ENCODE measurements at regions of chr20 and their contacts with region 1.

Region 1: DNA sequence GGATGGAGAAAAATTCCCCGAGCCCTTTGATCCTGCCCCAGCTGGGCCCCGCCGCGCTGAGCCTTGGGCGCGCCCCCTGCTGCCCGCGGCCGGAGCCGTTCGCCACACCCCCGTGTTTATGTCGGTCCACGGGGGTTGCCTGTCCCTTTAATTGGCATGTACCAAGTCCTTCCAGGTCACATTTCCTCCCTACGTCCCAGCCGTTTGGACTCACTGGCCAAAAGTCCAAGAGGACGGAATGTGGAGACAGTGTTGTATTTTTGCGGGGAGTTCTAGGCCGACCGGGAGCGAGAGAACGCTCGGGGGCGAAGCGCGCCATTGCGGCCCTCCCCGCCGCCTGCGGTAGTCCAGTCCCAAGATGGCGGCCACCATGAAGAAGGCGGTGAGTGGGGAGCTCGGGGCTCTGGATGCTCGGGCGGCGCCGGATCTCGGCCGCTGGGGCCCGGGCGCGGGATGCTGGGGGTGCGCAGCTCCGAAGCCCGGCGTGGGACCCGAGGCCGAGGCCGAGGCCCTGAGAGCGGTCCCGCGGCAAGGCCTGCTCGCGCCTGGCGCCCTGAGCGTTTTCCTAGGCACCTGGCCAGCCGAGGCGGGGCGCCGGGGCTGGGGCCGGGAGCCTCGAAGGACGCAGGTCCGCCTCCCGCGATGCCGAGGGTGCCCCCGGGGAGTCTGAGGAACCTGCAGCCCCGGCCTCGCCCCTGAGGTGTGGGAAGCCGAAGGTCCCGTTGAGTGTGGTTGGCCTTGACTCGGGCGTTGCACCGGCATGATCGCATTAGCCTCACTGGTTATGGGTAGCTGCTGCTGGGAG is at the start of gene PFDN4:
- DNase-seq: peak; percentile 69 to 85 (median 80)
- ATAC-seq: peak; percentile 95
- H3K4me3 ChIP-seq: peak within 1 kb of the TSS; percentile 65
- H3K4me3 Mint-ChIP-seq: peak within 1 kb of the TSS; percentile 75 to 98 (median 97)
- H3K27ac ChIP-seq: peak within 1 kb of the TSS; percentile 89
- H3K27ac Mint-ChIP-seq: peak within 1 kb of the TSS; percentile 99 to 100 (median 100)
- H3K4me1 ChIP-seq: peaks cover 14 to 15% of the 10 kb centered on the region in 2 donors
- H3K4me1 Mint-ChIP-seq: peaks cover 20 to 41% (median 38%) of the 10 kb centered on the region in 7 donors
- H3K27me3 ChIP-seq: no peaks in the 10 kb centered on the region
- H3K27me3 Mint-ChIP-seq: no peaks in the 10 kb centered on the region
- total RNA-seq, gene PFDN4: 14.6 to 30.4 (median 17.7) TPM

Region 2: GRCh38 chr20:54190217-54190616 is 17.7 kb before region 1 on chr20:
- CTCF ChIA-PET with region 1: no interaction called
- POLR2A ChIA-PET with region 1: no interaction called
- intact Hi-C with region 1: no loop called
- DNase-seq: no peak
- ATAC-seq: no peak
- H3K4me3 ChIP-seq: no peak overlapping the region
- H3K4me3 Mint-ChIP-seq: no peak overlapping the region
- H3K27ac ChIP-seq: no peak overlapping the region
- H3K27ac Mint-ChIP-seq: no peak overlapping the region
- H3K4me1 ChIP-seq: no peaks in the 10 kb centered on the region
- H3K4me1 Mint-ChIP-seq: no peaks in the 10 kb centered on the region
- H3K27me3 ChIP-seq: no peaks in the 10 kb centered on the region
- H3K27me3 Mint-ChIP-seq: peaks cover 9 to 20% (median 16%) of the 10 kb centered on the region in 5 donors

Region 3: DNA sequence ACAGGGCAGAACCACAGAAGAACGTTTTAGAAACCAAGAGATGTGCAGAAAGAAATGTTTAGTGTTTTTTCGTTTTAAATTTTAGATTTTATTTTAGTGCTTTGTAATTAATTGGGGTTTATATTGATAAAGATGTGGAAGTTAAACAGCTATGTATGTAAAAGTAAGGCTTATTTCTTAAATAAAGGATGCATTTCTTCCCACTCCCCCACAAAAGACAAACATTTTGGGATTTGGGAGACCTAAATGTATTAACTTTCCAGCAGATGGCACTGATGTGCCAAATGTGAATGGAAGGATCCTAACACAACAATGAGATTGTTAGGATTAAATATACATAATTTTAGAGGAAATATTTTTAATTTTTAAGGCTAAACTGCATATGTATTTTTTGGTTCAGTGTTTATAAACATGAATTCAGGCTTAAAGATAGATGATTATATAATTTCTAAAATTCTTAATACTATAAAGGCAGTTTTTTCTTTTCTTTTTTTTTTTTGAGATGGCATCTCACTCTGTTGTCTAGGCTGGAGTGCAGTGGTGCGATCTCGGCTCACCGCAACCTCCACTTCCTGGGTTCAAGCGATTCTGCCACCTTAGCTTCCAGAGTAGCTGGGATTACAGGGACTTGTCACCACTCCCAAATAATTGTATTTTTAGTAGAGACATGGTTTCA is 11.9 kb after region 1 on chr20:
- CTCF ChIA-PET with region 1: interaction called, 3 read pairs
- POLR2A ChIA-PET with region 1: interaction called, 11 read pairs
- intact Hi-C with region 1: no loop called
- DNase-seq: no peak
- ATAC-seq: no peak
- H3K4me3 ChIP-seq: no peak overlapping the region
- H3K4me3 Mint-ChIP-seq: no peak overlapping the region
- H3K27ac ChIP-seq: no peak overlapping the region
- H3K27ac Mint-ChIP-seq: peak overlapping the region in 1 of 9 donors; percentile 83
- H3K4me1 ChIP-seq: peaks cover 0 to 17% of the 10 kb centered on the region in 2 donors
- H3K4me1 Mint-ChIP-seq: peaks cover 18 to 34% (median 24%) of the 10 kb centered on the region in 7 donors
- H3K27me3 ChIP-seq: no peaks in the 10 kb centered on the region
- H3K27me3 Mint-ChIP-seq: no peaks in the 10 kb centered on the region

Region 4: GRCh38 chr20:54680872-54681619 is 473.1 kb after region 1 on chr20:
- CTCF ChIA-PET with region 1: no interaction called
- POLR2A ChIA-PET with region 1: no interaction called
- intact Hi-C with region 1: no loop called
- DNase-seq: peak in 1 of 9 donors; percentile 8
- ATAC-seq: no peak
- H3K4me3 ChIP-seq: no peak overlapping the region
- H3K4me3 Mint-ChIP-seq: no peak overlapping the region
- H3K27ac ChIP-seq: no peak overlapping the region
- H3K27ac Mint-ChIP-seq: no peak overlapping the region
- H3K4me1 ChIP-seq: no peaks in the 10 kb centered on the region
- H3K4me1 Mint-ChIP-seq: no peaks in the 10 kb centered on the region
- H3K27me3 ChIP-seq: no peaks in the 10 kb centered on the region
- H3K27me3 Mint-ChIP-seq: peaks cover 5 to 76% (median 36%) of the 10 kb centered on the region in 5 donors

Measured in naive thymus-derived CD4-positive, alpha-beta T cell (primary cell).